OCI-LY7 (cell line): ENCODE measurements at regions of chr11 and their contacts with region 1.

Region 1: DNA sequence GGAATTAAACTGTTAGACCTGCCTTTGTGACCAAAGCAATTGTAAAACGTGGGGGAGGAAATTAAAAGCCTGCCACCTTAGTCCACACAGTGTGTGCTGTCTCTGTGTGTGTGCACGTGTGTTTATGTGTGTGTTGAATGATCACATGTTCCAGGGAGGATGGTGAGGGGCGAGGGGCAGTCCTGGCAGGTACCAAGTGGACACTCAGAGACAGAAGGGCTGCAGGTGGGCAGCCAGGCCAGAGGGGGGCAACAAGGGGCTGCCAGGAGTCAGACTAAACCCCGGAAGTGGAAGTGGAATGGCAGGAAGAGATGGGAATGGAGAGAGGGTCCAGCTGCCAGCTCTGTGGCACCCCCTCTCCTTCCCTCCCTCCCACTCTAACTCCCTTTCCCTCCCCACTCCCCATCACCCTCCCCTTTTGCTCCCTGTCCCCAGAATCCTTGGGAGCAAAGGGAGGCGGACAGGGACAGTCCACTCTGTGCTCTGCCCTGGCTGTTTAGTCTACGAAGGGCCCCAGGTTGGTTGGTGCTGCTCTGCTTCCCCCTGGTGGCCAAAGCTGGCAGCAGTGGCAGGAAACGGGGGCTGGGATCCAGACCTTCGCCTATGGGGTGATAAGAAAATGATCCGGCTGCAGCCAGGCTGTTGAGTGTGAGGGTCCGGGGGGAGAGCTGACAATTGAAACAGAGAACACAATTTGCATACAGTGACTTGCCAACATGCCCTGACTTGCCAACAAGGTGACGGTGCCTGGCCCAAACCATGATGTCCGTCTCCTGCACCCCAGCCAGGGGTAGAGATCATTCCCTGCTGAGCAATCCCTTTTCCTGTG is 24.4 kb downstream of the P2RY2 start:
- DNase-seq: peak; percentile 79
- H3K4me3 ChIP-seq: peak overlapping the region; percentile 13
- H3K27ac ChIP-seq: no peak overlapping the region
- H3K4me1 ChIP-seq: peaks cover 5% of the 10 kb centered on the region
- CTCF ChIP-seq: peak; percentile 98

Region 2: GRCh38 chr11:72793425-72794367 is 448.8 kb before region 1 on chr11 and contains the start of gene STARD10:
- CTCF ChIA-PET with region 1: interaction called, 18 read pairs
- POLR2A ChIA-PET with region 1: no interaction called
- intact Hi-C with region 1: no loop called
- DNase-seq: peak; percentile 98
- H3K4me3 ChIP-seq: peak within 1 kb of the TSS; percentile 70
- H3K27ac ChIP-seq: peak within 1 kb of the TSS; percentile 68
- H3K4me1 ChIP-seq: peaks cover 30% of the 10 kb centered on the region
- CTCF ChIP-seq: peak; percentile 99
- total RNA-seq, gene STARD10: 8.1 and 12.9 TPM in 2 replicates

Region 3: GRCh38 chr11:72814286-72815109 is 428.0 kb before region 1 on chr11 and contains the start of gene ATG16L2:
- CTCF ChIA-PET with region 1: no interaction called
- POLR2A ChIA-PET with region 1: no interaction called
- intact Hi-C with region 1: loop called (anchors 5 kb)
- DNase-seq: peak; percentile 91
- H3K4me3 ChIP-seq: peak within 1 kb of the TSS; percentile 84
- H3K27ac ChIP-seq: peak within 1 kb of the TSS; percentile 91
- H3K4me1 ChIP-seq: peaks cover 27% of the 10 kb centered on the region
- CTCF ChIP-seq: peak; percentile 60
- total RNA-seq, gene ATG16L2: 99.1 and 103 TPM in 2 replicates

Region 4: GRCh38 chr11:72831513-72832300 is 410.8 kb before region 1 on chr11:
- CTCF ChIA-PET with region 1: no interaction called
- POLR2A ChIA-PET with region 1: no interaction called
- intact Hi-C with region 1: loop called (anchors 2 kb)
- DNase-seq: peak; percentile 70
- H3K4me3 ChIP-seq: no peak overlapping the region
- H3K27ac ChIP-seq: peak overlapping the region; percentile 16
- H3K4me1 ChIP-seq: peaks cover 5% of the 10 kb centered on the region
- CTCF ChIP-seq: peak; percentile 87

Region 5: GRCh38 chr11:73184953-73185671 is 57.4 kb before region 1 on chr11:
- CTCF ChIA-PET with region 1: interaction called, 4 read pairs
- POLR2A ChIA-PET with region 1: interaction called, 4 read pairs
- intact Hi-C with region 1: loop called (anchors 1 kb)
- DNase-seq: peak; percentile 65
- H3K4me3 ChIP-seq: peak overlapping the region; percentile 54
- H3K27ac ChIP-seq: no peak overlapping the region
- H3K4me1 ChIP-seq: peaks cover 17% of the 10 kb centered on the region
- CTCF ChIP-seq: peak; percentile 93

Region 6: DNA sequence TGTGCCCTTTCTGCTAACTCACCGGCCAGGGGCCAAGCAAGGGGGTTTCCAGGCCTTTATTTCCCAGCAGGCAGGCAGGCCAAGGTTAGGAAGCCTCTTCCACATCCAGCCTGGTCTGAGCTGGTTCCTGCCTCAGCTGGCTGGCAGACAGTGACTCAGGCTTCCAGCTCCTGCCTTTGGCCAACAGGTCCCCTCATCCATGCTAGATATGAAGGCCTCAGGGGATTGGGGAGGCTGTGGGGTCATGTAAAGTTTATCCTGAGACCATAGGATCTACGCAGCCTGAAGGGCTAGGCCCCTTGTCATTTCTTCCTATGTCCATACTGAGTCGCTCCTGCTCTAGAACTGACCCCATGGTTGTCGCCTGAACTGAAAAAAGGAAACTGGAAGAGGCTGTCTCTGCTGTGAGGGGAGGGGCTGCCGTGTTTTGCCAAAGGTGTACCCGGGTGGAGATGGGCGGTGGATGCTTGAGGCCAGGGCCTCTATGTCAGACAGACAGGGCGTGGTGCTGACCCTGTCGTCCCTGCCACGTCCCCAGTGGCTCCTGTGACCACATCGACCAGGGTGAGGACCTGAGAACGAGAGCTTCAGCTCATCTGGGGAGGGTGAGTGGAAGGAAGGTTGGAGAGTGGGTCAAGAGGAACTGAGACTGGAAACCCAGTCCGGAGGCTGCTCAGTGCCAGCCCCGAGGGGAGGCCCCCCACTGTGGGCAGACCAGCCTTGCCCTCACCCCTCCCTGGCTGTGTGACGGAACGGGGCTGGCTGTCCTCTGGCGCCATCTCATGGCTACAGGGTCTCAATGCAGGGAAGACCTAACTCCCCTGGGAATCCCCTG is 46.6 kb after region 1 on chr11:
- CTCF ChIA-PET with region 1: no interaction called
- POLR2A ChIA-PET with region 1: no interaction called
- intact Hi-C with region 1: loop called (anchors 1 kb)
- DNase-seq: peak; percentile 80
- H3K4me3 ChIP-seq: no peak overlapping the region
- H3K27ac ChIP-seq: no peak overlapping the region
- H3K4me1 ChIP-seq: peaks cover 19% of the 10 kb centered on the region
- CTCF ChIP-seq: peak; percentile 98

Region 7: GRCh38 chr11:73578592-73579185 is 336.2 kb after region 1 on chr11:
- CTCF ChIA-PET with region 1: no interaction called
- POLR2A ChIA-PET with region 1: no interaction called
- intact Hi-C with region 1: no loop called
- DNase-seq: no peak
- H3K4me3 ChIP-seq: no peak overlapping the region
- H3K27ac ChIP-seq: no peak overlapping the region
- H3K4me1 ChIP-seq: no peaks in the 10 kb centered on the region
- CTCF ChIP-seq: no peak